ENCODE measurements at regions of chr1 and their contacts with region 1.

Region 1: GRCh38 chr1:229264487-229264886 is 6.4 kb upstream of the RAB4A start:
- DNase-seq: no peak
- ATAC-seq: no peak
- H3K4me3 ChIP-seq: no peak overlapping the region
- H3K27ac ChIP-seq: no peak overlapping the region
- H3K4me1 ChIP-seq: peaks cover 0 to 2% (median 0%) of the 10 kb centered on the region in 12 donors
- H3K27me3 ChIP-seq: no peaks in the 10 kb centered on the region
- CTCF ChIP-seq: no peak
- POLR2A ChIP-seq: no peak

Region 2: GRCh38 chr1:229341774-229342655 is 77.5 kb after region 1 on chr1:
- intact Hi-C with region 1: loop called in 3 of 10 experiments (anchors 5 kb)
- DNase-seq: peak; percentile 85 to 93 (median 89)
- ATAC-seq: peak; percentile 88 to 98 (median 96)
- H3K4me3 ChIP-seq: peak overlapping the region; percentile 69 to 99 (median 92)
- H3K27ac ChIP-seq: peak overlapping the region; percentile 55 to 97 (median 92)
- H3K4me1 ChIP-seq: peaks cover 0 to 45% (median 14%) of the 10 kb centered on the region in 12 donors
- H3K27me3 ChIP-seq: no peaks in the 10 kb centered on the region
- CTCF ChIP-seq: no peak
- POLR2A ChIP-seq: no peak

Region 3: GRCh38 chr1:229388876-229389580 is 124.5 kb after region 1 on chr1:
- intact Hi-C with region 1: no loop called
- DNase-seq: no peak
- ATAC-seq: no peak
- H3K4me3 ChIP-seq: no peak overlapping the region
- H3K27ac ChIP-seq: no peak overlapping the region
- H3K4me1 ChIP-seq: no peaks in the 10 kb centered on the region
- H3K27me3 ChIP-seq: peaks cover 0 to 5% (median 0%) of the 10 kb centered on the region in 9 donors
- CTCF ChIP-seq: no peak
- POLR2A ChIP-seq: no peak